ENCODE measurements at regions of chr2 and their contacts with region 1.

Region 1: GRCh38 chr2:200798514-200798913 is 13.2 kb upstream of the BZW1 start:
- DNase-seq: no peak
- ATAC-seq: peak; percentile 99
- H3K4me3 Mint-ChIP-seq: no peak overlapping the region
- H3K27ac Mint-ChIP-seq: no peak overlapping the region
- H3K4me1 Mint-ChIP-seq: peaks cover 7% of the 10 kb centered on the region
- H3K27me3 Mint-ChIP-seq: peaks cover 7% of the 10 kb centered on the region

Region 2: DNA sequence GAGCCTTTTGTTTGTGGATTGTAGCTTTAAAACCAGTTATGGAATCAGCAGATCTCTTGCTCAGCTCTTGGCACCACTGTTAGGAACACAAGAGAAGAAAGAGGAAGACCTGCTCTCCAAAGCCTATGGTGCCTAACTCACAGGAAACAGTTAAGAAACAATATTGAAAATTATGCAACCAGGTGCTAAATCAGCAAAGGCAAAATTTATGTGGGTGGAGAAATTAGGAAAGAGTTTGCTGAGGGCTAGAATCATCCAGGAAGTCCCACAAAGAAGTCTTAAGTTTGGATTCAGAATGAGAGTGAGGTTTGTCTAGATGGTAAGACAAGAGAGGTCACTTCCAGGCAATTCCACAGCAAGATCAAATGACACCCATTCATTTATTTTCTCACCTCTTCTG is 163.3 kb before region 1 on chr2:
- CTCF ChIA-PET with region 1: no interaction called
- POLR2A ChIA-PET with region 1: no interaction called
- intact Hi-C with region 1: no loop called
- DNase-seq: no peak
- ATAC-seq: no peak
- H3K4me3 Mint-ChIP-seq: no peak overlapping the region
- H3K27ac Mint-ChIP-seq: no peak overlapping the region
- H3K4me1 Mint-ChIP-seq: no peaks in the 10 kb centered on the region
- H3K27me3 Mint-ChIP-seq: peaks cover 10% of the 10 kb centered on the region

Region 3: GRCh38 chr2:200765139-200765951 is 33.2 kb before region 1 on chr2:
- CTCF ChIA-PET with region 1: no interaction called
- POLR2A ChIA-PET with region 1: interaction called, 3 read pairs
- intact Hi-C with region 1: loop called in 1 of 2 experiments (anchors 1 kb)
- DNase-seq: peak; percentile 69
- ATAC-seq: peak; percentile 90
- H3K4me3 Mint-ChIP-seq: peak overlapping the region; percentile 7
- H3K27ac Mint-ChIP-seq: peak overlapping the region; percentile 82
- H3K4me1 Mint-ChIP-seq: peaks cover 30% of the 10 kb centered on the region
- H3K27me3 Mint-ChIP-seq: no peaks in the 10 kb centered on the region

Region 4: GRCh38 chr2:200829258-200829655 is 30.7 kb after region 1 on chr2:
- CTCF ChIA-PET with region 1: no interaction called
- POLR2A ChIA-PET with region 1: no interaction called
- intact Hi-C with region 1: no loop called
- DNase-seq: no peak
- ATAC-seq: no peak
- H3K4me3 Mint-ChIP-seq: no peak overlapping the region
- H3K27ac Mint-ChIP-seq: no peak overlapping the region
- H3K4me1 Mint-ChIP-seq: no peaks in the 10 kb centered on the region
- H3K27me3 Mint-ChIP-seq: no peaks in the 10 kb centered on the region

Region 5: DNA sequence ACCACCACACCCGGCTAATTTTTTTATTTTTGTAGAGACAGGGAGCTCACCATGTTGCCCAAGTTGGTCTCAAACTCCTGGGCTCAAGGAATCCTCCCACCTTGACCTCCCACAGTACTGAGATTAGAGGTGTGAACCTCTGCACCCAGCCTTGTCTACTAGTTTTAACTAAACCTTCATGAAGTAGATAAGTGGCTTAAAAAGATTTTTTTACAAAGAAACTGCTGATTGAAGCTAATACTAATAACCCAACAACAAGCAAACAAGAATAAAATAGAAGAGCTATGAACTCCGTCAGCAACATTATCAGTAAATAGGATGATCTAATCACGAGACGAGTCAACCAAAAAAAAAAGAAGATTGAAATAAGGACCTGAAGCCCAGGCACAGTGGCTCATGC is 292.1 kb after region 1 on chr2:
- CTCF ChIA-PET with region 1: no interaction called
- POLR2A ChIA-PET with region 1: no interaction called
- intact Hi-C with region 1: no loop called
- DNase-seq: no peak
- ATAC-seq: no peak
- H3K4me3 Mint-ChIP-seq: no peak overlapping the region
- H3K27ac Mint-ChIP-seq: no peak overlapping the region
- H3K4me1 Mint-ChIP-seq: peaks cover 3% of the 10 kb centered on the region
- H3K27me3 Mint-ChIP-seq: no peaks in the 10 kb centered on the region

Measured in activated CD4-positive, alpha-beta T cell treated with anti-CD3 and anti-CD28 coated beads for 36 hours (primary cell).